GM13976 (cell line): ENCODE measurements at regions of chr17 and their contacts with region 1.

Region 1: GRCh38 chr17:64420143-64420971 is 28.6 kb upstream of the MILR1 start:
- DNase-seq: peak; percentile 69
- CTCF ChIP-seq: peak; percentile 73

Region 2: DNA sequence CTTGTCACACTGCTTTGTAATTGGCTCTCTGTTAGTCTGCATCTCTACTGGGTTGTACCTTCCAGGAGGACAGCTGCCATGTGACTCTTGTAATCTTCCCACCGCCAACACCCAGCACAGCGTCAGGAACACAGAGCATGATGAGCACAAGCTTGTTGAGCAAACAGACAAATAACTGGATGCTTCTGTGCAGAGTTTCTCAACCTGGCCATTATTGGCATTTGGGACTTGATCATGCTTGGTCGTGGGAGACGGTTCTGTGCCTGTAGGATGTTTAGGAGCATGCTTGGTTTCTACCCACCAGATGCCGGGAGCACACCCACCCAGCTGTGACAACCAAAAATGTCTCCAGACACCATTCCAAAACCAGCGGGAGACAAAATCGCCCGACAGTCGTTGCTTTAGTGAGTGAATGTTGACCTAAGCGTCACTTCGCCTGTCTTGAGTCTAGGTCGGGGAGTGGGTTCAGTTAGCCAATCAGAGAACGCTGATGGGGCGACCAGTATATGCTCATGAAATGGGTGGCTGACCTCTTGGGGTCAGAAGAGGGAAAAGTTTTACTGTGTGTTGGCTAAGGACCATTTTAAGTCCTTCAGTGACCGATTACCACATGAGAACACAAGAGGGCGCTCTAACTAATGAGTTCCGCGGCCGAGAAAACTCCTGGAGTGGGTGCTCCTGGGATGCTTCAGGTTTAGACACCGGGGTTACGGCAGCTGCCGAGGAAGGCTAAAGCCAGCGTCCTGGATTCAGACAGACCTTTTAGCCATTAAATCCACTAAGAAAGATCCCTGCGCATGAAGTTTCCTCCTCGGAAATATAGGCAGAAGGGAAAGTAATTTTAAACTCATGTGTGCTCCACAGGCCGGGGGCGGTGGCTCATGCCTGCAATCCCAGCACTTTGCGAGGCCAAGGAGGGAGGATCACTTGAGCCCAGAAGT is 99.5 kb before region 1 on chr17:
- in situ Hi-C with region 1: loop called (anchors 5 kb)
- DNase-seq: peak; percentile 80
- CTCF ChIP-seq: peak; percentile 69

Region 3: DNA sequence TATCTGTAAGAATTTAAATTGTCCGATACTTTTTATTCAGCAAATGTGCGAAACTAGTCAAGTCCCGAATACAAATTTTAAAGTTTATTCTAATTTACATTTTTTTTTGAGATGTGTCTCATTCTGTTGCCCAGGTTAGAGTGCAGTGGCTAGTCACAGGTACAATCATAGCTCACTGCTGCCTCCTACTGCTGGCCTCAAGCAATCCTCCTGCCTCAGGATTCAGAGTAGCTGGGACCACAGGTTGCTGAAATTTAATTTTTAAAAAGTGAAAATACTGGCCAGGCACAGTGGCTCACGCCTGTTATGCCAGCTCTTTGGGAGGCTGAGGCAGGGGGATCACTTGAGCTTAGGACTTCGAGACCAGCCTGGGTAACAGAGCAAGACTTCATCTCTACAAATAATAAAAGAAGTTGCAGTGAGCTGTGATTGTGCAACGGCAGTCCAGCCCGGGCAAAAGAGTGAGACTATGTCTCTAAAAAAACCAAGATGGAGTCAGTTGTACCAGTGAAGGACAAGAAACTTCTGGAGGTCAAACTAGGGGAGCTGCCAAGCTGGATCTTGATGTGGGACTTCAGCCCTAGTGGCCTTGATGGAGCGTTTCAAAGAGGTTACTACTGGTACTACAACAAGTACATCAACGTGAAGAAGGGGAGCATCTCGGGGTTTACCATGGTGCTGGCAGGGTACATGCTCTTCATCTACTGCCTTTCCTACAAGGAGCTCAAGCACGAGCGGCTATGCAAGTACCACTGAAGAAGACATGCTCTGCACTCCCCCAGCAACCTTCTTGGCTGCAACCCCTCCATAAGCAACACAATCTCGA is 70.9 kb after region 1 on chr17:
- in situ Hi-C with region 1: loop called (anchors 5 kb)
- DNase-seq: no peak
- CTCF ChIP-seq: peak; percentile 55

Region 4: DNA sequence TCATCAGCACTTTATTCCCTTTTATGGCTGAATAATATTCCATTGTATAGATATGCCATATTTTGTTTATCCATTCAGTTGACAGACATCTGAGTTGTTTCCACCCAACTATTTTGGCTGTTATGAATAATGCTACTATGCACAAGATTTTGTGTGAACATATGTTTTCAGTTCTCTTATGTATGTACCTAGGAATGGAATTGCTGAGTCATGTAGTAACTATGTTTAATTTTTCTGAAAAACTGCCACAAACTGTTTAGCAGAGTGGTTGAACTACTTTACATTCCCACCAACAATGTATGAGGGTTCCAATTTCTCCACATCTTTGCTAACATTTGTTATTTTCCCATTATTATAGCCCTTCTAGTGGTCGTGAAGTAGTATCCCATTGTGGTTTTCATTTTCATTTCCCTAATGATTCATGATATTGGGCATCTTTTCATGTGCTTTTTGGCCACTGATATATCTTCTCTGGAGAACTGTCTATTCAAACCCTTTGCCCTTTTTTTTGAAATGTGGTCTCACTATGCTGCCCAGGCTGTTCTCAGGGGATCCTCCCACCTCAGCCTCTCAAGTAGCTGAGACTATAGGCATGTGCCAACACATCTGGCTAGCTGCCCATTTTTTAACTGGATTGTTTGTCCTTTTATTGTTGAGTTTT is 215.4 kb after region 1 on chr17:
- in situ Hi-C with region 1: loop called (anchors 5 kb)
- DNase-seq: peak; percentile 38
- CTCF ChIP-seq: no peak

Region 5: DNA sequence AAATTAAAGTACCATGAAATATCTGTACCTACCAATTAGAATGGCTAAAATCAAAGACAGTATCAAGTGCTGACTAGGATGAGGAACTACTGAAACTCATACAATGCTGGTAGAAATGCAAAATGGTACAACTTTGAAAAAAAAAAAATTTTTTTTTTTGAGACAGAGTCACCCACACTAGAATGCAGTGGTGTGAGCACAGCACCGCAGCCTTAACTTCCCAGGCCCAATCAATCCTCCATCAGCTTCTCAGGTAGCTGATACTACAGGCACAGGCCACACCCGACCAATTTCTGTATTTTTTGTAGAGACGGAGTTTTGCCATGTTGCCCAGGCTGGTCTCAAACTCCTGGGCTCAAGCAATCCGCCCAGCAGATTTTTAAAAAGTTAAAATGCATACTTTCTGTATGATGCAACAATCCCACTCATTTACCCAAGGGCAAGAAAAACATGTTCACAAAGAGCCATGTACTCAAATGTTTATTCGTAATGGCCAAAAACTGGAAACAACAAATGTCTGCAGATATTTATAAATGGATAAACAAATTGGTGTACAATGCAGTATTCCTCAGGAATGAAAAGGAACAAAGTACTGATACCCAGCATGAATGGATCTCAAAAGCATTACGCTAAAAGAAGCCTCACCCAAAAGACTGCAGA is 233.1 kb after region 1 on chr17:
- in situ Hi-C with region 1: no loop called
- DNase-seq: no peak
- CTCF ChIP-seq: no peak